ENCODE measurements at regions of chr6 and their contacts with region 1.

Region 1: GRCh38 chr6:110083875-110084585 is 95.4 kb downstream of the WASF1 start:
- DNase-seq: no peak
- H3K4me3 ChIP-seq: no peak overlapping the region
- H3K27ac ChIP-seq: no peak overlapping the region
- H3K4me1 ChIP-seq: no peaks in the 10 kb centered on the region
- H3K27me3 ChIP-seq: no peaks in the 10 kb centered on the region
- CTCF ChIP-seq: no peak

Region 2: GRCh38 chr6:110098511-110099116 is 14.6 kb after region 1 on chr6:
- CTCF ChIA-PET with region 1: no interaction called
- POLR2A ChIA-PET with region 1: interaction called, 10 read pairs
- intact Hi-C with region 1: no loop called
- DNase-seq: no peak
- H3K4me3 ChIP-seq: no peak overlapping the region
- H3K27ac ChIP-seq: peak overlapping the region; percentile 11
- H3K4me1 ChIP-seq: peaks cover 17% of the 10 kb centered on the region
- H3K27me3 ChIP-seq: no peaks in the 10 kb centered on the region
- CTCF ChIP-seq: no peak